Activated CD4-positive, alpha-beta T cell treated with anti-CD3 and anti-CD28 coated beads for 36 hours (primary cell): ENCODE measurements at regions of chr2 and their contacts with region 1.

Region 1: GRCh38 chr2:168346725-168347477 is 99.5 kb upstream of the STK39 start:
- DNase-seq: peak; percentile 80
- ATAC-seq: peak; percentile 85
- H3K4me3 Mint-ChIP-seq: peak overlapping the region; percentile 67
- H3K27ac Mint-ChIP-seq: peak overlapping the region; percentile 20
- H3K4me1 Mint-ChIP-seq: peaks cover 5% of the 10 kb centered on the region
- H3K27me3 Mint-ChIP-seq: no peaks in the 10 kb centered on the region

Region 2: GRCh38 chr2:168336864-168337263 is 10.0 kb before region 1 on chr2:
- CTCF ChIA-PET with region 1: interaction called, 17 read pairs
- POLR2A ChIA-PET with region 1: no interaction called
- intact Hi-C with region 1: no loop called
- DNase-seq: peak; percentile 77
- ATAC-seq: peak; percentile 98
- H3K4me3 Mint-ChIP-seq: no peak overlapping the region
- H3K27ac Mint-ChIP-seq: no peak overlapping the region
- H3K4me1 Mint-ChIP-seq: peaks cover 7% of the 10 kb centered on the region
- H3K27me3 Mint-ChIP-seq: peaks cover 2% of the 10 kb centered on the region

Region 3: GRCh38 chr2:168614172-168615018 is 267.5 kb after region 1 on chr2:
- CTCF ChIA-PET with region 1: interaction called, 3 read pairs
- POLR2A ChIA-PET with region 1: no interaction called
- intact Hi-C with region 1: loop called (anchors 2 kb)
- DNase-seq: peak; percentile 17
- ATAC-seq: no peak
- H3K4me3 Mint-ChIP-seq: no peak overlapping the region
- H3K27ac Mint-ChIP-seq: no peak overlapping the region
- H3K4me1 Mint-ChIP-seq: peaks cover 16% of the 10 kb centered on the region
- H3K27me3 Mint-ChIP-seq: no peaks in the 10 kb centered on the region

Region 4: GRCh38 chr2:168687314-168687713 is 340.4 kb after region 1 on chr2:
- CTCF ChIA-PET with region 1: interaction called, 9 read pairs
- POLR2A ChIA-PET with region 1: no interaction called
- intact Hi-C with region 1: loop called (anchors 1 to 2 kb)
- DNase-seq: peak; percentile 22
- ATAC-seq: no peak
- H3K4me3 Mint-ChIP-seq: no peak overlapping the region
- H3K27ac Mint-ChIP-seq: no peak overlapping the region
- H3K4me1 Mint-ChIP-seq: peaks cover 9% of the 10 kb centered on the region
- H3K27me3 Mint-ChIP-seq: no peaks in the 10 kb centered on the region

Region 5: DNA sequence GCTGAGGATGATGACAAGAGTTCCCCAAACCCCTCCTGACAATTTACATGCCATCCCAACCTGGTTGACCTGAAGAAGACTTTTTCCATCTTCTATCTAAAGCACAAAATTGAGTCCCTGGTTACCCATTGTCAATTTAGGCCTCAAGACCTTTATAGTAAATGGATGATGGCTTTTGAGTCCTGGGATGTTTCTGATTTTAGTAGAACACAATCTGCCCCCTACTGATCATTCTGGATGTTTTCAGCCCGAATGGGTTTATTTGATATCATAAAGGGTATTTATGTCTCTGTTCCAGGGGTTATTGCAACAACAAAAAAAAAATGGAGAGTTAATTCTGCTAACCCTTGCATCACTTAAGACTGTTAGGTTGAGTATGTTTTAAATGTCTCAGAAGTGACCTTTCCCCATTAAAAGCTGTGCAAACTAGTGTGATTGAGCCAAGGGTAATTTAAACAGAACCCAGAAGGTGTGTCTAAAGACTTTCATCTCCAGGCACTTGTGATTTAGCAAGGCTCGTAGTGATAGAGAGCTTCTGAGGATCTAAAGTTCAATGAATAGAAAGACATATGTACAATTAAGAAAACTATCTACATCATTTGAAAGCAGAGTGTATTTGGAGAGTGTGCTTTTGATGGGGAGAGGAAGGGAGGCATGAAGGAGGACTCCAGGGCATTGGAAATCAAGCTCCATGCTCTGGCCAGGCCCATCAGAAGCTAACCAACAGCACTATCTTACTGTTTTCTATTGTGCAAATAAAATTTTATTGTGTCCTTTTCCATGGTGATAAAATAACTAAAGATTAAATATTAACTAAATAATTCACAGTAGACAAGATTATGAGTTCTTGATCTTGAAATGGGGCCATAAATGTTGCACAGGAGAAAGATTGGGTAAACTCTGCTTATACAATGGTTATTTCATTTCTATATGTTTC is 358.9 kb after region 1 on chr2:
- CTCF ChIA-PET with region 1: interaction called, 21 read pairs
- POLR2A ChIA-PET with region 1: no interaction called
- intact Hi-C with region 1: loop called (anchors 1 to 5 kb)
- DNase-seq: no peak
- ATAC-seq: no peak
- H3K4me3 Mint-ChIP-seq: no peak overlapping the region
- H3K27ac Mint-ChIP-seq: no peak overlapping the region
- H3K4me1 Mint-ChIP-seq: no peaks in the 10 kb centered on the region
- H3K27me3 Mint-ChIP-seq: no peaks in the 10 kb centered on the region

Region 6: GRCh38 chr2:168758970-168759820 is 412.3 kb after region 1 on chr2:
- CTCF ChIA-PET with region 1: interaction called, 7 read pairs
- POLR2A ChIA-PET with region 1: no interaction called
- intact Hi-C with region 1: loop called (anchors 1 kb)
- DNase-seq: peak; percentile 29
- ATAC-seq: peak; percentile 81
- H3K4me3 Mint-ChIP-seq: no peak overlapping the region
- H3K27ac Mint-ChIP-seq: no peak overlapping the region
- H3K4me1 Mint-ChIP-seq: peaks cover 38% of the 10 kb centered on the region
- H3K27me3 Mint-ChIP-seq: no peaks in the 10 kb centered on the region

Region 7: DNA sequence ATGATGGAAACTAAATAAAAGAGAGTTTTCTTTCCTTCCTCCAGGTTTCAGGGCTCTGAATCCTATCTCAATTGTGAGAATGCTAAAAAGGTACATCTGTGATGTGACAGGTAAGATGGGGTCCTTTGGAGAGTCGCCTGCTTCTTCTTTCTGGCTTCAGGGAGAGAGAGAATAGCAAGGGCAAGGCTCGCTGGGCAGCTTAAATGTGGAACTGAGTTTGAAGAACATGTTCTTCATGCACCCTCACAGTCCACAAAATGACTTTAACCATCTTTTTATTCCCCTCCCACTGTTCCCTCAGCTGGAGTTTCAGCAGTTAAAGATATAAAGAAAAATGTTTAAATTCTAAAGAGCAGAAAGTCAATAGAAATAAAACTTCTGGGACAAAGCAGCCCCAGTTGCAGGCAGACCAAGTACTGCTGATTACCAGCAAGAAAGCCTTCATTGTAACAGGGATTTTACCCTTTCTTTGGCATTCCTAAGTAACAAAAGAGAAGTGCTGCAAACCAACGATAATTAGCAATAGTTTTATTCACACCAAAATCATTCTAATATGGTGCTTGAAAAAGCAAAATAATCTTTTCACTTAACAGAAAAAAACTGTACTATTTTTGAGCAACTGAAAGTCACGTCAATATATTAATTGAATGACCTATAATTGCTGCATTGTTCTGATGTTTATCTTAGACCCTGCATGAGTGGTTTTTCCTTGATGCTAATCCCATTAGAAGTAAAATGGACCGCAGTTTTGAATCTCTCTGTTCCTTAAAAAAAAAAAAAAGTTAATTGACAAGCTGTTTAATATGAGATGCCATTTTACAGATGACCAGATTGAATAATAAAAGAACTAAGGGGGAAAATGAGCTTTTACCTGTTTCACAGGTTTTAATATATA is 954.0 kb after region 1 on chr2:
- CTCF ChIA-PET with region 1: no interaction called
- POLR2A ChIA-PET with region 1: no interaction called
- intact Hi-C with region 1: no loop called
- DNase-seq: no peak
- ATAC-seq: no peak
- H3K4me3 Mint-ChIP-seq: no peak overlapping the region
- H3K27ac Mint-ChIP-seq: no peak overlapping the region
- H3K4me1 Mint-ChIP-seq: no peaks in the 10 kb centered on the region
- H3K27me3 Mint-ChIP-seq: peaks cover 15% of the 10 kb centered on the region